AG04450 (cell line): ENCODE measurements at regions of chr5 and their contacts with region 1.

Region 1: DNA sequence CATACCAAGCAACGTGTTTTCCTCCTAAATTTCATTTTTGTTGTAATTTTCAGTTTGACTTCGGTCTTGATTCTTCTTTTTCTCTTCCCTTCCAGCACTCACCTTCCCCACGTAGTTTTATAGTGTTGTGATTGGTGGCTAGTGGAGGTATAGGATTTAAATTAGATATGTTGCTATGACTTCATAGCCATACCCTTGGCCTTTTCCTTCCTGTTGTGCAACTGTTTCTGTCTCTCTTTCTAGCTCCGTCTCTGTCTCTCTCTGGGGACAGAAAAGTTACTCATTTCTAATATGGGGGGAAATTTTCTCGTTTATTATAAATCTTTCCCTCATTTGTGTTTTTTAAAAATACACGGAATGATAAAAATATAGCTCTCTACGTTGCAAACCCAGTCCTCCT is 20.6 kb upstream of the C5orf24 start:
- DNase-seq: no peak
- H3K4me3 ChIP-seq: no peak overlapping the region
- H3K27ac ChIP-seq: no peak overlapping the region
- H3K27me3 ChIP-seq: no peaks in the 10 kb centered on the region
- CTCF ChIP-seq: no peak

Region 2: GRCh38 chr5:135050244-135050767 is 225.1 kb after region 1 on chr5:
- CTCF ChIA-PET with region 1: interaction called, 14 read pairs
- POLR2A ChIA-PET with region 1: no interaction called
- DNase-seq: no peak
- H3K4me3 ChIP-seq: no peak overlapping the region
- H3K27ac ChIP-seq: no peak overlapping the region
- H3K27me3 ChIP-seq: peaks cover 70% of the 10 kb centered on the region
- CTCF ChIP-seq: no peak